ENCODE measurements at regions of chr15 and their contacts with region 1.

Region 1: GRCh38 chr15:92097474-92098178 is 244.1 kb downstream of the SLCO3A1 start:
- ATAC-seq: peak; percentile 84 to 98 (median 95)
- H3K4me3 ChIP-seq: no peak overlapping the region
- H3K27ac ChIP-seq: no peak overlapping the region
- H3K4me1 ChIP-seq: peaks cover 0 to 3% of the 10 kb centered on the region in 2 donors

Region 2: DNA sequence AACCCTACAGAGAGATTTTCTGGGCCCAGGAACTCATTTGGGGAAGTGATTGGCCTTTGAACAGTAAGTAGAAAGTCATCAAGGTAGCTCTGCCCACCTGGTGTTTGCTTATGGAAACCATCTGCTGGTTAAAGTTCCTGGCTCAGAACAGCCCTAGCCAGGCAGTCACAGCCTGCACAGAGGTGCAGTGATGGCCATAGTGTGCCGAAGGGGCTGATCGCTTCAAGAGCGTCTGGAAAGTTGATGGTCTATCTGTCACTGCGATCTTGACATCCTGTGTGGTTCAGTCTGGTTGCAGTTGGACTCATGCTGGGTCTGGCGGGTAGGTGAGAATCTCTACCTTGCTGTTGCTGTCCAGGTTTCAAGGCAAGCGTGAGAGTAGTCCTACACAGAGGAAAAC is 92.5 kb before region 1 on chr15:
- in situ Hi-C with region 1: no loop called
- ATAC-seq: no peak
- H3K4me3 ChIP-seq: no peak overlapping the region
- H3K27ac ChIP-seq: no peak overlapping the region
- H3K4me1 ChIP-seq: peaks cover 4 to 25% of the 10 kb centered on the region in 2 donors

Region 3: DNA sequence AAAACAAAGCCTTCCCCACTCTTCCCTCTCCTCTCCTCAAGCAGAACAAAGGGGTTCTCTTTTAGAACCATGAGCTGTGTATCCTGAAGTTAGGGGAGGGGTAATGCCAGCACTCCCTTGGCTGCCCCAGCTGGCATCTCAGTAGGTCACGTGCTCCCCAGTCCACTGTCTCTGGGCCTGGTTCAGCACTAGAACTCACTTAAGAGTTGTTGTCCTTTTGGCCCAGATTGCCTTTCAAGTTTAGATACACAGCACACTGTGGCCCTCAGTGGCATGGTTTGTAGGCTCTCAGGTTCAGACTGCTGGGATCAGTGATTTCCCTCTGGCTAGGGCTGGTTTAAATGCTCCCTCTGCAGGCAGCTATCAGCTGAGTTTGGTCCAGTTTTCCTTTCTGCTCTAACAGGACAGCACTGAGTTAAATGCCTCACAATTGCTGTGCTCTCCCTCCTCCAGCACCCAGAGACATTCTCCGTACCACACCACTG is 107.7 kb after region 1 on chr15:
- in situ Hi-C with region 1: loop called in 2 of 9 experiments (anchors 10 to 25 kb)
- ATAC-seq: peak in 4 of 8 experiments; percentile 54 to 79 (median 64)
- H3K4me3 ChIP-seq: no peak overlapping the region
- H3K27ac ChIP-seq: no peak overlapping the region
- H3K4me1 ChIP-seq: no peaks in the 10 kb centered on the region

Region 4: GRCh38 chr15:92217896-92218295 is 120.3 kb after region 1 on chr15:
- in situ Hi-C with region 1: loop called in 2 of 9 experiments (anchors 10 to 25 kb)
- ATAC-seq: no peak
- H3K4me3 ChIP-seq: no peak overlapping the region
- H3K27ac ChIP-seq: no peak overlapping the region
- H3K4me1 ChIP-seq: no peaks in the 10 kb centered on the region

Region 5: GRCh38 chr15:92365067-92365466 is 267.4 kb after region 1 on chr15:
- in situ Hi-C with region 1: loop called in 1 of 9 experiments (anchors 25 kb)
- ATAC-seq: peak in 5 of 8 experiments; percentile 56 to 97 (median 92)
- H3K4me3 ChIP-seq: no peak overlapping the region
- H3K27ac ChIP-seq: no peak overlapping the region
- H3K4me1 ChIP-seq: peaks cover 4 to 6% of the 10 kb centered on the region in 2 donors

Region 6: GRCh38 chr15:92391640-92392039 is 294.0 kb after region 1 on chr15:
- in situ Hi-C with region 1: loop called in 1 of 9 experiments (anchors 25 kb)
- ATAC-seq: peak in 3 of 8 experiments; percentile 23 to 52 (median 28)
- H3K4me3 ChIP-seq: no peak overlapping the region
- H3K27ac ChIP-seq: no peak overlapping the region
- H3K4me1 ChIP-seq: peaks cover 16 to 18% of the 10 kb centered on the region in 2 donors

Region 7: GRCh38 chr15:92714477-92715401 is 617.1 kb after region 1 on chr15:
- in situ Hi-C with region 1: loop called in 6 of 9 experiments (anchors 5 to 25 kb)
- ATAC-seq: peak; percentile 81 to 92 (median 90)
- H3K4me3 ChIP-seq: peak overlapping the region; percentile 48 to 50 (median 49)
- H3K27ac ChIP-seq: peak overlapping the region; percentile 62 to 69
- H3K4me1 ChIP-seq: peaks cover 0 to 3% of the 10 kb centered on the region in 2 donors